CD8-positive, alpha-beta T cell (primary cell): ENCODE measurements at regions of chr10 and their contacts with region 1.

Region 1: DNA sequence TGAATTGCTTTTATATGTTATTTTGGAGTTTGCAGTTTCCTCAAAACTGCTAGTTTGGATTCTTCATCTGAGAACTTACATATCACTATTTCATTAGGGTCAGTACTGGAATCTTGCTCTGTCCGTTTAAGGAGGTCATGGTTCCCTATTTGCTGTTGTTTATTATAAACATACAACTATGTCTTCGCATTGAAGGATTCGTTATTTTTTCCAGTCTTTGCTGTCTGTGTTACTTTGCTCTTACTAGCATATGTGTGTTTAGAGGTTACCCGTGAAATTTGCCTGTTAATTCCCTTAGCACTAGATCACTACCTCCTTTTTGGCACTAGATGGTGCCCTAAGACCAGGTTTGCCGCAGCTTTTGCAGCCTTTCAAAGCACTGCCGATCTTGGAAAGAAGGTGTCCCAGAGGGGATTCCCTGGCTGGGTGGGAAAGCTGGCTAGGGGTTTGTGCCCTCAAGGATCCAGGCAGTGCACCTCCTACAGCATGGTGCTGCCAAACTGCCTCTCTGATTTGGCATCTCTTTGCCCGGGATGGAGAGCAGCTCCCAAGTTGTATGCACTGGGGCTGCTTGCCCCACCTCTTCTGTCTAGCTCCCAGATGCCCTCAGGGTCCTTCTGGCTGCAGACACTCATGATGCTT is 103.1 kb upstream of the APBB1IP start:
- DNase-seq: peak; percentile 31 to 85 (median 63)
- ATAC-seq: peak; percentile 92
- H3K4me3 ChIP-seq: peak overlapping the region; percentile 36 to 50
- H3K4me3 Mint-ChIP-seq: peak overlapping the region; percentile 78
- H3K27ac ChIP-seq: no peak overlapping the region
- H3K27ac Mint-ChIP-seq: peak overlapping the region; percentile 16
- H3K4me1 ChIP-seq: no peaks in the 10 kb centered on the region
- H3K4me1 Mint-ChIP-seq: peaks cover 5% of the 10 kb centered on the region
- H3K27me3 ChIP-seq: no peaks in the 10 kb centered on the region
- H3K27me3 Mint-ChIP-seq: no peaks in the 10 kb centered on the region
- CTCF ChIP-seq: peak; percentile 99

Region 2: GRCh38 chr10:26437637-26438461 is 102.8 kb after region 1 on chr10 and contains the start of gene APBB1IP:
- CTCF ChIA-PET with region 1: interaction called, 4 read pairs
- POLR2A ChIA-PET with region 1: interaction called, 4 read pairs
- intact Hi-C with region 1: loop called in 1 of 2 experiments (anchors 5 kb)
- DNase-seq: peak; percentile 28 to 79 (median 57)
- ATAC-seq: peak; percentile 43
- H3K4me3 ChIP-seq: peak within 1 kb of the TSS; percentile 85 to 94
- H3K4me3 Mint-ChIP-seq: peak within 1 kb of the TSS; percentile 93
- H3K27ac ChIP-seq: peak within 1 kb of the TSS; percentile 83 to 90
- H3K27ac Mint-ChIP-seq: peak within 1 kb of the TSS; percentile 98
- H3K4me1 ChIP-seq: peaks cover 40% of the 10 kb centered on the region
- H3K4me1 Mint-ChIP-seq: peaks cover 52% of the 10 kb centered on the region
- H3K27me3 ChIP-seq: no peaks in the 10 kb centered on the region
- H3K27me3 Mint-ChIP-seq: no peaks in the 10 kb centered on the region
- CTCF ChIP-seq: no peak
- total RNA-seq, gene APBB1IP: 36.4 to 36.8 TPM

Region 3: GRCh38 chr10:26550774-26551526 is 215.9 kb after region 1 on chr10:
- CTCF ChIA-PET with region 1: interaction called, 125 read pairs
- POLR2A ChIA-PET with region 1: no interaction called
- intact Hi-C with region 1: no loop called
- DNase-seq: no peak
- ATAC-seq: no peak
- H3K4me3 ChIP-seq: no peak overlapping the region
- H3K4me3 Mint-ChIP-seq: no peak overlapping the region
- H3K27ac ChIP-seq: peak overlapping the region in 1 of 2 experiments; percentile 3
- H3K27ac Mint-ChIP-seq: peak overlapping the region; percentile 52
- H3K4me1 ChIP-seq: no peaks in the 10 kb centered on the region
- H3K4me1 Mint-ChIP-seq: peaks cover 19% of the 10 kb centered on the region
- H3K27me3 ChIP-seq: no peaks in the 10 kb centered on the region
- H3K27me3 Mint-ChIP-seq: no peaks in the 10 kb centered on the region
- CTCF ChIP-seq: no peak

Region 4: GRCh38 chr10:26697163-26697921 is 362.3 kb after region 1 on chr10 and contains the start of gene PDSS1:
- CTCF ChIA-PET with region 1: interaction called, 3 read pairs
- POLR2A ChIA-PET with region 1: no interaction called
- intact Hi-C with region 1: loop called in 1 of 2 experiments (anchors 10 kb)
- DNase-seq: peak; percentile 23 to 82 (median 60)
- ATAC-seq: peak; percentile 73
- H3K4me3 ChIP-seq: peak within 1 kb of the TSS; percentile 85 to 92
- H3K4me3 Mint-ChIP-seq: peak within 1 kb of the TSS; percentile 94
- H3K27ac ChIP-seq: peak within 1 kb of the TSS; percentile 69 to 81
- H3K27ac Mint-ChIP-seq: peak within 1 kb of the TSS; percentile 93
- H3K4me1 ChIP-seq: peaks cover 18% of the 10 kb centered on the region
- H3K4me1 Mint-ChIP-seq: peaks cover 35% of the 10 kb centered on the region
- H3K27me3 ChIP-seq: no peaks in the 10 kb centered on the region
- H3K27me3 Mint-ChIP-seq: no peaks in the 10 kb centered on the region
- CTCF ChIP-seq: no peak
- total RNA-seq, gene PDSS1: 3.4 to 3.7 TPM

Region 5: DNA sequence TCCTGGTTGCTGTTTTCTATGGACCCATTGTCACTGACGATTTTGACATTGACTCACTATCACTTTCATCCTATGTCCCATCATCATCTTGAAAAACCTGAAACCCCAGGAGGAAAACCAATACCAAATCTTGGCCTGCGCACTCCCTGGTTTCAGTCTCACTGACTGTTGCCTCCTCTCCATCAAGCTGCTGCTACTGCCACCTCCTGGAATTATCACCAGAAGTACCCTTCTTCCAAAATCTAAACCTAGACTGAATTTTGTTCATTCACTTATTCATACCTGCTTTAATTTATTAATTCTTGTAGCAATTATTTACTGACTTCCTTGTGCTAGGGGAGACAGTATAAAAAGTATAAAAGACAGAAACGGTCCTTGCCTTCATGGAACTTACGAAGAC is 950.1 kb after region 1 on chr10:
- CTCF ChIA-PET with region 1: no interaction called
- POLR2A ChIA-PET with region 1: no interaction called
- intact Hi-C with region 1: loop called in 1 of 2 experiments (anchors 10 kb)
- DNase-seq: peak in 7 of 9 experiments; percentile 6 to 71 (median 42)
- ATAC-seq: peak; percentile 73
- H3K4me3 ChIP-seq: no peak overlapping the region
- H3K4me3 Mint-ChIP-seq: no peak overlapping the region
- H3K27ac ChIP-seq: no peak overlapping the region
- H3K27ac Mint-ChIP-seq: no peak overlapping the region
- H3K4me1 ChIP-seq: no peaks in the 10 kb centered on the region
- H3K4me1 Mint-ChIP-seq: peaks cover 3% of the 10 kb centered on the region
- H3K27me3 ChIP-seq: no peaks in the 10 kb centered on the region
- H3K27me3 Mint-ChIP-seq: no peaks in the 10 kb centered on the region
- CTCF ChIP-seq: peak; percentile 59